CD4-positive, alpha-beta T cell (primary cell): ENCODE measurements at regions of chr17 and their contacts with region 1.

Region 1: DNA sequence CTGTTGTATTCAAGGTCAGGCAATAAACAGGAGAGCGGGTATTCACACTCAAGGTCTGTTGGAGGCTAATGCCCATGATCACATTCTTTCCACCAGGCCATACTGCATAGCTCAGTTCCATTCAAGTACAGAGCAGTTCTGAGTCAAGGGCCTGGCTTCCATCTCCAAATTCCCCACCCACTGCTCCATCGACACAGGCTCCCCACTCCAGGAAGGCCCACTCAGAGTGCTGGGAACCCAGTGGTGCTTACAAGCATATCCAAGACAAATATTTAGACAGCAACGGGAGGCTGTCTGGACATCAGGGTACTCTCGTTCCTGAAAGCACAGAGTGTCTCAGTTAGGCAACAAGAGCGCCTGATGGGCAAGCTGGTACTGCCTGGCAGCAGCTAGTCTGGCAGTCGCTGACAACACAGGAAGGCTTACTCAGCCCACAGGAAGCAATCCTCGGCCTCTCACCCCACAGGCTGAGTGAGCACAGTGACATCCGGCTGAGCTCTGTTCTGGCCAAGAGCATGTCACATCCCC is 40.9 kb downstream of the RFFL start:
- DNase-seq: peak; percentile 37 to 88 (median 72)
- ATAC-seq: peak; percentile 97
- H3K4me3 ChIP-seq: peak overlapping the region; percentile 15
- H3K4me3 Mint-ChIP-seq: peak overlapping the region; percentile 12
- H3K27ac ChIP-seq: peak overlapping the region; percentile 84 to 87
- H3K27ac Mint-ChIP-seq: peak overlapping the region; percentile 95
- H3K4me1 ChIP-seq: peaks cover 35% of the 10 kb centered on the region
- H3K4me1 Mint-ChIP-seq: peaks cover 63% of the 10 kb centered on the region
- H3K27me3 ChIP-seq: no peaks in the 10 kb centered on the region
- H3K27me3 Mint-ChIP-seq: no peaks in the 10 kb centered on the region
- CTCF ChIP-seq: no peak

Region 2: GRCh38 chr17:34980681-34981537 is 41.7 kb before region 1 on chr17:
- CTCF ChIA-PET with region 1: interaction called, 4 read pairs
- POLR2A ChIA-PET with region 1: interaction called, 18 read pairs
- intact Hi-C with region 1: no loop called
- DNase-seq: peak; percentile 38 to 91 (median 66)
- ATAC-seq: peak; percentile 80
- H3K4me3 ChIP-seq: peak overlapping the region; percentile 90
- H3K4me3 Mint-ChIP-seq: peak overlapping the region; percentile 94
- H3K27ac ChIP-seq: peak overlapping the region; percentile 92 to 97
- H3K27ac Mint-ChIP-seq: peak overlapping the region; percentile 88
- H3K4me1 ChIP-seq: peaks cover 26% of the 10 kb centered on the region
- H3K4me1 Mint-ChIP-seq: peaks cover 56% of the 10 kb centered on the region
- H3K27me3 ChIP-seq: no peaks in the 10 kb centered on the region
- H3K27me3 Mint-ChIP-seq: no peaks in the 10 kb centered on the region
- CTCF ChIP-seq: peak; percentile 56

Region 3: DNA sequence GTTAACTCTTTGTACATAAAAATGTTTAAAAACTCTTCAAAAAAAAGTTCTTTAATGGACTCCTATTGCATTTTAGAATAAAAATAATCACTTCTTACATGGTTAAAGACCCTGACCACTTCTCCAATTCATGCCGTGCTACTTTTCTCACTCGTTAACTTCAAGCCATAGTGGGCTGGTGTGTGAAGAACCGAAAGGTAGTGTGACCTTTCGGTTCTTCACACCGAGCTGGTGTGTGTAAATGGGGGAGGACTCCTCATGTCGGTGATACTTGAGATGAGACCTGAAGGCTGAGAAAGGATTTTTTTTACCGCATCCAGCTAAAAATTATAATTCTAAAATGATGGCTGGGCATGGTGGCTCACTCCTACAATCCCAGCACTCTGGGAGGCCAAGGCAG is 18.8 kb after region 1 on chr17:
- CTCF ChIA-PET with region 1: interaction called, 9 read pairs
- POLR2A ChIA-PET with region 1: interaction called, 28 read pairs
- intact Hi-C with region 1: loop called in 1 of 2 experiments (anchors 2 kb)
- DNase-seq: peak in 1 of 14 experiments; percentile 40
- ATAC-seq: no peak
- H3K4me3 ChIP-seq: no peak overlapping the region
- H3K4me3 Mint-ChIP-seq: no peak overlapping the region
- H3K27ac ChIP-seq: no peak overlapping the region
- H3K27ac Mint-ChIP-seq: no peak overlapping the region
- H3K4me1 ChIP-seq: peaks cover 50% of the 10 kb centered on the region
- H3K4me1 Mint-ChIP-seq: peaks cover 62% of the 10 kb centered on the region
- H3K27me3 ChIP-seq: no peaks in the 10 kb centered on the region
- H3K27me3 Mint-ChIP-seq: no peaks in the 10 kb centered on the region
- CTCF ChIP-seq: no peak

Region 4: GRCh38 chr17:35046740-35047283 is 24.2 kb after region 1 on chr17:
- CTCF ChIA-PET with region 1: interaction called, 9 read pairs
- POLR2A ChIA-PET with region 1: interaction called, 45 read pairs
- intact Hi-C with region 1: loop called in 1 of 2 experiments (anchors 1 kb)
- DNase-seq: peak; percentile 28 to 87 (median 50)
- ATAC-seq: peak; percentile 74
- H3K4me3 ChIP-seq: peak overlapping the region; percentile 37
- H3K4me3 Mint-ChIP-seq: peak overlapping the region; percentile 78
- H3K27ac ChIP-seq: peak overlapping the region; percentile 76 to 82
- H3K27ac Mint-ChIP-seq: peak overlapping the region; percentile 93
- H3K4me1 ChIP-seq: peaks cover 90% of the 10 kb centered on the region
- H3K4me1 Mint-ChIP-seq: peaks cover 79% of the 10 kb centered on the region
- H3K27me3 ChIP-seq: no peaks in the 10 kb centered on the region
- H3K27me3 Mint-ChIP-seq: no peaks in the 10 kb centered on the region
- CTCF ChIP-seq: no peak

Region 5: DNA sequence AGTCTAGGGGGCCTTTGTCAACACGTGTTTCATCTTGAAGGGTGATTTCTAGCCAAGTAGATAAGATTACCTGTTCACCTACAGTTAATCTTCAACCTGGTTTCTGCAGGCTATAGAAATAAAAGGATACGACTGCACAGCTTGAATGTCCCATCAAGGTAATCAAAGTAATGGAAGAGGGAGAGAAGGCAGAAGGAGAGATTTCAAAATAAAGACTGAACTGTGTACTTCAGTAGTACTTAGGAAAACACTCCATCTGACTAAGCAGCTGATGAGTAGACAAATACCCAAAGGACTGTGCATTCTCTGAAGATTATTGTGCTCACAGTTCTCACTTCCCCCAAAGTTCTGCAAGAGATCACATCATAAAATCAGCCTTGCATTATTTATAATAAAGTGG is 46.7 kb after region 1 on chr17:
- CTCF ChIA-PET with region 1: interaction called, 28 read pairs
- POLR2A ChIA-PET with region 1: interaction called, 44 read pairs
- intact Hi-C with region 1: no loop called
- DNase-seq: no peak
- ATAC-seq: no peak
- H3K4me3 ChIP-seq: no peak overlapping the region
- H3K4me3 Mint-ChIP-seq: no peak overlapping the region
- H3K27ac ChIP-seq: no peak overlapping the region
- H3K27ac Mint-ChIP-seq: peak overlapping the region; percentile 46
- H3K4me1 ChIP-seq: peaks cover 48% of the 10 kb centered on the region
- H3K4me1 Mint-ChIP-seq: peaks cover 80% of the 10 kb centered on the region
- H3K27me3 ChIP-seq: no peaks in the 10 kb centered on the region
- H3K27me3 Mint-ChIP-seq: no peaks in the 10 kb centered on the region
- CTCF ChIP-seq: no peak